ENCODE measurements at regions of chr13 and their contacts with region 1.

Region 1: DNA sequence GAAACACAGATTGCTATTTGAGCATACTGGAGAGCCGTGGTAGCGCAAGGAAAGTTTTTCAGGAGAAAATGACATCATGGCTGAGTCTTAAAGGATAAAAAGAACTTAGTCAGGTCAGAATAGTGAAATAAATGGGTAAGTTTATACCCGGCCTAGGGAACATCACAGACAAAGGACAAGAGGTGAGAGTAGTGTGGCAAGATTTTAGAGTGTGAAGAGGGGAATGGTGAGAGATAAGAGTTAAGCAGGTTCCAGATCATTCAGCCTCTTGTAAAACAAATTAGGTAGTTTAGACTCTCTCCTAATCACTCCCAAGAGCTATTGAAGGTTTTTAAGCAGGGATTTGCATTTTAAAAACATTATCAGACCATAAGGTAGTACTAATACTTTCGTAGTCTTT is 116.0 kb upstream of the MAB21L1 start:
- DNase-seq: no peak
- ATAC-seq: no peak
- H3K4me3 ChIP-seq: no peak overlapping the region
- H3K27ac ChIP-seq: no peak overlapping the region
- H3K4me1 ChIP-seq: no peaks in the 10 kb centered on the region
- H3K27me3 ChIP-seq: no peaks in the 10 kb centered on the region
- CTCF ChIP-seq: no peak
- POLR2A ChIP-seq: no peak
- RAD21 ChIP-seq: no peak

Region 2: DNA sequence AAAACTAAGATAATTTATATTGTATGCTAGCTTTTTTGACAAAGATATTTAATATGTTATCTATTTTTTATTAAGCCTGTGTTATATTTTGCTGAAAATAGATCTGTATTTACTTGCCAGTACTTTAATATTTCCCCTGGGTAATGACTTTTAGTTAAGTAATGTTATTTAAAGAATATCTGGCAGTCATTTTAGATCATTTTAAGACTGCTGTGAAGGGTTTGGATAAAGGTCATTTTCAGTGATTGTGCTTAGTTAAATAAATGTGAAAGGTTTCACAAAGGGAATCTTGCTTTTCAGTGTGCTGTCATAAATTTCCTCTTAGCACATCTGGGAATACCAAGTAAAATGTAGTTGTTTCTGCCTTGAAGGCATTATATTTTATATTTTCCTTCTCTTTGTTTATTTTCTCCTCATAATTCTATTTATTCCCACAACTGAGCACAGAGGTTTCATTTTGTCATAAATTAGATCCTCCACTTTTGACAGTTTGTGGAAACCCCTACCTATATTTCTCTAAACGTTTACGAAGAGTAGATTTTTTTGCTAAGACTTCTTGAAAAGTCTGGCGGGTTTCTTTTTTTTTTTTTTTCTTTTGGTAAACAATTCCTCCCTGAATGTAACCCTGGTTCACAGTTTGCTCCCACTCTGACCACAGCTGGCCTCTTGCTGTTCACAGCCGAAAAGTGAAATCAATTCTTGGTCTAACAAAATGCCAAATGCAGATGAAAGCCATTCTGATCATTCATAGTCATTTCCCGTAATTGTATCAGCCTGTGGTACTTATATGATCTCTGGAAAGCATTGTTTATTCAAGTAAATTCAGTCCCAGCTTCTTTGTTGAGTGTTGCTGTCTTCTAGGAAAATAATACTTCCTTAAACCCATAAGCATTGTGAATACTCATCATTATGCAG is 203.8 kb before region 1 on chr13:
- CTCF ChIA-PET with region 1: no interaction called
- POLR2A ChIA-PET with region 1: no interaction called
- dilution Hi-C with region 1: no loop called
- in situ Hi-C with region 1: no loop called
- intact Hi-C with region 1: loop called (anchors 1 kb)
- DNase-seq: peak; percentile 3
- ATAC-seq: peak; percentile 44; the same call in 1 of the 2 replicates
- H3K4me3 ChIP-seq: no peak overlapping the region
- H3K27ac ChIP-seq: no peak overlapping the region
- H3K4me1 ChIP-seq: no peaks in the 10 kb centered on the region
- H3K27me3 ChIP-seq: no peaks in the 10 kb centered on the region
- CTCF ChIP-seq: no peak
- POLR2A ChIP-seq: no peak
- RAD21 ChIP-seq: no peak

Region 3: GRCh38 chr13:35760735-35761281 is 168.4 kb after region 1 on chr13:
- CTCF ChIA-PET with region 1: no interaction called
- POLR2A ChIA-PET with region 1: no interaction called
- dilution Hi-C with region 1: no loop called
- in situ Hi-C with region 1: no loop called
- intact Hi-C with region 1: no loop called
- DNase-seq: no peak
- ATAC-seq: no peak
- H3K4me3 ChIP-seq: no peak overlapping the region
- H3K27ac ChIP-seq: no peak overlapping the region
- H3K4me1 ChIP-seq: peaks cover 3% of the 10 kb centered on the region
- H3K27me3 ChIP-seq: peaks cover 10% of the 10 kb centered on the region
- CTCF ChIP-seq: no peak
- POLR2A ChIP-seq: no peak
- RAD21 ChIP-seq: no peak

Measured in IMR-90 (cell line).